ENCODE measurements at regions of chr20 and their contacts with region 1.

Region 1: GRCh38 chr20:43914311-43915210 is at the start of gene TOX2:
- DNase-seq: no peak
- ATAC-seq: peak; percentile 88
- H3K4me3 ChIP-seq: peak within 1 kb of the TSS; percentile 63 to 76
- H3K27ac ChIP-seq: peak within 1 kb of the TSS; percentile 86
- H3K4me1 ChIP-seq: peaks cover 23% of the 10 kb centered on the region
- H3K27me3 ChIP-seq: no peaks in the 10 kb centered on the region
- CTCF ChIP-seq: no peak
- total RNA-seq, gene TOX2: 85.4 TPM

Region 2: DNA sequence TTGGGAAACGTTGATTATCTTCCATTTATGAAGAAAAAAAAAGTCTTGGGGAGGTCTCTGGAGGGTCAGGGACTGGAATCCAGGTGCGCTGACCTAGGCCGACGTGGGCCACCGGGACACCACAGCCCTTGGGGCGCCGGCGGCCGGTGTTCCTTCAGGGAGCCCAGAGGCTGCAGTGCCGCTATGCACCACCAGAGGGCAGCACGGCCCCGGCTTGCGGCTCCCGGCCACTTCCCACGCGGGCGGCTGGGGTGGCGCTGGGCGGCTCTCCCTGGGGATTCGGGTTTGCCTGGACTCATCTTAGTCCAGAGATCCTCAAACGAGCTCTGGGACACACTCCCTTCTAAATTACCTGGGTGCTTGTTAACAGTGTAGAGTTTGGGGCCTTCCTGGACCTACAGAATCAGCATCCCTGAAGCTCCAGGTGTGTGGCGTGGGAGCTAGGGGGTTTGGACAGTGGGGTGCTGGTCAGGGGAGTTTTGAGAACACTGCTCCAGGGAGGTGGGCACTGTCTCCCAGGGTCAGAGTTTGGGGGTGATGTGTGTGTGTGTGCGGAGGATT is 164.7 kb before region 1 on chr20:
- CTCF ChIA-PET with region 1: no interaction called
- POLR2A ChIA-PET with region 1: no interaction called
- in situ Hi-C with region 1: no loop called
- intact Hi-C with region 1: loop called (anchors 10 kb)
- DNase-seq: peak; percentile 27
- ATAC-seq: peak; percentile 94
- H3K4me3 ChIP-seq: no peak overlapping the region
- H3K27ac ChIP-seq: no peak overlapping the region
- H3K4me1 ChIP-seq: peaks cover 3% of the 10 kb centered on the region; the same call in 1 of the 2 replicates
- H3K27me3 ChIP-seq: no peaks in the 10 kb centered on the region
- CTCF ChIP-seq: peak; percentile 99

Region 3: DNA sequence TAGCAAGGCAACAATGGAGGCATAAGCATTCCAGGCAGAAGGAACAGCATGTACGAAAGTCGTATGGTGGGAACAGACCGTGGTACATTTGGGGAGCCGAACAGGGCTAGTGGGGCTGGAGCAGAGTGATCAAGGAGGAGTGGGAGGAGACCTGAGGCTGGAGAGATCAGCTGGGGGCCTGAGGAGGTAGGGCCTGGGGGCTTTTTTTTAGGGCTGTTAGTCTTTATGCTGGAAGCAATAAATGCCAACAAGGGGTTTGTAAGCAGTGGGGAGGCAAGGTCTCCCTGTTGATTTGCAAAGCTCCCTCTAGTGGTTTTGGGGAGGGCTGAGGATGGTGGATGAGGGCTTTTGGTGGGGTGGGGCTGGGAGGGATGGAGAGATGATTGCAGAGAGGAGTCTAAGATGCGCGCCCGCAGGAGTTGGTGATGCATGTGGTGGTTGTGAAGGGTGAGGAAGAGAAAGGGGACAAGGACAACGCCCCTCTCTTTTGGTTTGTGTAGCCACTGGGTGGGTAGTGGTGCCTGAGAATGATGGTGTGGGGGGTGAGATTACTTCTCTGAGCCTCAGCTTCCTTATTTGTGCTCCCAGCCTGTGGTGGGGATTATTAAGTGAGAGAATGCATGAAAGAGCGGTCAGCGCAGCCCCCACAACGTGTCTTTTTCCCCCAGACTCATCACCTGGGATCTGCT is 74.0 kb before region 1 on chr20:
- CTCF ChIA-PET with region 1: no interaction called
- POLR2A ChIA-PET with region 1: no interaction called
- in situ Hi-C with region 1: no loop called
- intact Hi-C with region 1: loop called (anchors 5 kb)
- DNase-seq: no peak
- ATAC-seq: peak; percentile 76
- H3K4me3 ChIP-seq: no peak overlapping the region
- H3K27ac ChIP-seq: no peak overlapping the region
- H3K4me1 ChIP-seq: peaks cover 13% of the 10 kb centered on the region
- H3K27me3 ChIP-seq: no peaks in the 10 kb centered on the region
- CTCF ChIP-seq: peak; percentile 86

Region 4: DNA sequence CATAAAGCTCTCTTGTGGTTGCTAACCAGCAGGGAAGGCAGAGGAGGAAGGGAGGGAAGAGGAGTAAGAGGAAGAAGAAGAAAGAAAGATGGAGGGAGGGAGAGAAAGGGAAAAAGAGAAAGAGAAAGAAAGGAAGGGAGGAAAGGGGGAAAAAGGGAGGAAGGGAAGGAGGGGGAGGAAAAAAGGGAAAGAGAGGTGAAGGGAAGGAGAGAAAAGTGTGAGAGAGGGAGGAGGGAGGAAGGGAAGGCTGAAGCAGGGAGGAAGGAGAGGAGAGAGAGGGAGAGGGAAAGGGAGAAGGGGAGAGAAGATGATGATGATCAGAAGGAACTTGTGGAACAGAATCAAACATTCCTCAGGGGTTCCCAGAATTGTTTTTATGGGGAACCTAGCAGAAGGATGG is 57.4 kb before region 1 on chr20:
- CTCF ChIA-PET with region 1: no interaction called
- POLR2A ChIA-PET with region 1: interaction called, 34 read pairs
- in situ Hi-C with region 1: no loop called
- intact Hi-C with region 1: no loop called
- DNase-seq: no peak
- ATAC-seq: no peak
- H3K4me3 ChIP-seq: no peak overlapping the region
- H3K27ac ChIP-seq: no peak overlapping the region
- H3K4me1 ChIP-seq: no peaks in the 10 kb centered on the region
- H3K27me3 ChIP-seq: no peaks in the 10 kb centered on the region
- CTCF ChIP-seq: no peak

Measured in Panc1 (cell line).